ENCODE measurements at regions of chr20 and their contacts with region 1.

Region 1: DNA sequence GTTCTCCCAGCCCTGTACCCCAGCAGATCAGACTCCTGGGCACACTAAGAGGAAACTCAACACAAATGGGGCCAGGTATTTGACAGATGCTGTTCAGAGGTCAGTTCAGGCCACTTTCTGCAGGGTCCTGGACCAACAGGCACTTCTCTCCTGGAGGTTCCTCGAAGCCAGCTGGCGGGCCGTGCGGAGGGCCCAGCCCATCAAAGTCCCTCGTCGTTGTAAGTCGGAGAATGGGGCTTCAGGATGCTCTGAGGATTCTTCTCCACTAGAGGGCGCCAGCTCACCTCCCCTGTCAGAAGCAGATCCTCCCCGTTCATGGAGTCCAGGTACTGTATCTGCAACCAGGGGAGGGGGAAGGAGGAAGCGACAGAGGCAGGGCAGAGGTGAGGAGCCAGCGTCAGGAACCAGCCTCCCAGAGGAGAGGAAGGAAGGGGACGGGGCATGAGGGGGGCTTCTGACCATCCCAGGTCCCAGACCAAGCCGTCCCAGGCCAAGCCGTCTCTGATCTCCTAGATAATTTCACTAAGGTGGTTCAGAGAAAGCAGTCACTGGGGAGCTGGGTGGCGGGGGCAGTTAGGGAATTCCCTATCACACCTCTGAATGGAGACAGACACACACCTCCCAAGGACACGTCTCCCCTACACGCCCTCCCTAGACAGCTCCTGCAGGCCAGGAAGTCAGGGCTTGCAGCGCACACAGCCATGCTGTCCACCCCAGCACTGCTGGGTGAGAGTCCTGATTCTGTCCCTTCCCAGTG is 11.7 kb upstream of the FAM83C start:
- DNase-seq: peak; percentile 87 to 91 (median 90)
- ATAC-seq: peak; percentile 95
- H3K4me3 ChIP-seq: no peak overlapping the region
- H3K27ac ChIP-seq: no peak overlapping the region
- H3K4me1 ChIP-seq: peaks cover 17 to 18% of the 10 kb centered on the region in 2 experiments; a peak in 4 of 5 replicates
- H3K27me3 ChIP-seq: no peaks in the 10 kb centered on the region
- CTCF ChIP-seq: peak; percentile 91 to 97 (median 96)
- EP300 ChIP-seq: no peak
- POLR2A ChIP-seq: no peak
- RAD21 ChIP-seq: peak; percentile 83 to 91

Region 2: DNA sequence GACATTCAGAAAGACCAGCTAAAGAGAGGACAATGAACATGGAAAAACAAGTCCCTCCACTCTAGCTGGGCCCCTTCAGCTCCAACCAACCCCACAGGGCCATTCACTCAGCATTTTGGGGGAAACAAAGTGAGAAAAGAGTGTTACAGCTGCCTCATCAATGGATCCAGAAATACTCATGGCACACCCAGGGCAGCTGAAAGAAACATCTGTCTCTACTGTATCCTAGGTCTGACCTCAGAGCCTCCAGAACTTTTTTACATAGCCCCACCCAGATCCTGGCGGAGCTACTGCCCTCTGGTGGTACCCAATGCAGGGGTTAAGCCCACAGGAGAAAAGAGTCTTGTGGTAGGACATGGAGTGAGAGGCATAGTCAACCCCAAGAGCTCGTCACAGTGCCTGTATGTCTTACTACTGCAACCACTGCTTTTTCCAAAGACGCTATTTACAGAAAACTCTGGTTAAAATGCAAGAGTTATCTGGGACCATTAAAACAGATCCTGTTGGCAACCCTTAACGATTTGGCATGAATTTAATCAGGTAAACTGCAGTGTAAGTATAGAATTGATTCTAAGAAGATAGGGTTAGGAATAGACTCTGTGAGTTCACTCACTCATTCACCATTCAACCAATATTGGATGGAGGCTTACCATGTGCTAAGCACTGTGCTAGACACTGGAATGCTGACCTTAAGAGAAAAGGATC is 25.7 kb after region 1 on chr20:
- CTCF ChIA-PET with region 1: interaction called, 12 read pairs
- POLR2A ChIA-PET with region 1: interaction called, 3 read pairs
- in situ Hi-C with region 1: no loop called
- intact Hi-C with region 1: loop called (anchors 1 kb)
- DNase-seq: peak; percentile 78 to 82 (median 80)
- ATAC-seq: peak; percentile 98
- H3K4me3 ChIP-seq: no peak overlapping the region
- H3K27ac ChIP-seq: no peak overlapping the region
- H3K4me1 ChIP-seq: peaks cover 14 to 41% of the 10 kb centered on the region in 2 experiments
- H3K27me3 ChIP-seq: no peaks in the 10 kb centered on the region
- CTCF ChIP-seq: peak; percentile 91 to 94 (median 92)
- EP300 ChIP-seq: no peak
- POLR2A ChIP-seq: no peak
- RAD21 ChIP-seq: peak; percentile 73 to 79

Region 3: GRCh38 chr20:35447082-35447789 is 143.3 kb after region 1 on chr20:
- CTCF ChIA-PET with region 1: interaction called, 7 read pairs
- POLR2A ChIA-PET with region 1: interaction called, 5 read pairs
- in situ Hi-C with region 1: loop called (anchors 25 kb)
- intact Hi-C with region 1: no loop called
- DNase-seq: peak; percentile 77 to 89 (median 80)
- ATAC-seq: peak; percentile 96
- H3K4me3 ChIP-seq: peak overlapping the region; percentile 15; the same call in 1 of the 2 replicates
- H3K27ac ChIP-seq: no peak overlapping the region
- H3K4me1 ChIP-seq: no peaks in the 10 kb centered on the region; a peak in 1 of 5 replicates
- H3K27me3 ChIP-seq: no peaks in the 10 kb centered on the region
- CTCF ChIP-seq: peak; percentile 86 to 90 (median 89)
- EP300 ChIP-seq: no peak
- POLR2A ChIP-seq: peak; percentile 47; the same call in 1 of the 2 replicates
- RAD21 ChIP-seq: peak; percentile 60 to 71